Ascending aorta (tissue), 2 donors: ENCODE measurements at regions of chr2 and their contacts with region 1.

Region 1: DNA sequence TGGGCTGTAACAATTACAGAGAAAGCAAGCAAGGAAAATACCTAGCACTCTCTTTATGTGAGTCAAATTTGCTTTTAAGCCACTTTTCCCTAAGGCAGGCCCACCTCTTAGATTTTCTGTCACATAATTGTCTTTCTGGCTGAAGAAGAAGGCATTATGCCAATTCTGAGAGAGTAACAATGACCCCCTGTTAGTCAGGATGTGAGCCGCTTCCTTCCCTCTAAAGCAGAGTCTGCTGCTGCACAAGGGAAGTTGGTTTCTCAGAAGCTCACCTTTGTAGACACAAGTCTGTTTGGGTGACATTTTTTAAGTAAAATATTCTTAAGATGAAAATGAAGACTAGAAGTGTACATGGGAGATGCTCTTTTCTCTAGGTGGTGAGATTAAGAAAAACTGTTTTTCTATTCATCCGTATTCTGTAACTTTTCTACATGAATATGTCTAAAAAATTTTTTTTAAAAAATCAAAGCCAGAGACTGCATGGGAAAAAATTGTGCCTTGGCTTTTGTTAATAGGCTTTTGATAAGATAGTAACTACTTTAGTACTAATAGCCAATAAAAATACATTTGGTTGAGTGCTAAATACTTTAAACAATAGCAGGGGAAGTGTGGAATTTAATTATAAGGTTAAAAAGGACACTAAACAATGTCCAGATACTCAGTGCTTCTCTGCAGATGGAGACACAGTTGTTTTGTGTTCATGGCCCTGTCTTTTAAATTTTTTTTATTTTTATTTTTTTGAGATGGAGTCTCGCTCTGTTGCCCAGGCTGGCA is 33.4 kb upstream of the VPS54 start:
- DNase-seq: no peak
- H3K4me3 ChIP-seq: no peak overlapping the region
- H3K27ac ChIP-seq: no peak overlapping the region
- H3K4me1 ChIP-seq: no peaks in the 10 kb centered on the region
- H3K27me3 ChIP-seq: no peaks in the 10 kb centered on the region
- CTCF ChIP-seq: no peak

Region 2: DNA sequence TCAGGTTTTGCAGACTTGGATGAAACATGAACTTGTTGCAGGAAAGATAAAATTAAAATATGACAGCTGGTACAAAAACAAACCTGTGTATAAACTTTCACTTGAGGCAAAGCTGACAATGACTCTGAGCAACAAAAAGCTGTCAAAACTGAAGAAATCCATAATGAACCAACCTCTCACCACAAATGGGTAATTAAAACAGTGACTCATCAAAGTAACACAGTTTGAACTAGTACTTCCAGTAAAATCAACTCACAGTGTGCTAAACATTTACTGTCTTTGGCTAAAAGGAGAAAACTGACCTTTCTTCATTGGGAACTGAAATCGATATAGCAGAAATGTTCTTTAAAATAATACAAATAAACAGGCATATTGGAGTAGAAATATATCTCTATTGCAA is 674.1 kb before region 1 on chr2:
- intact Hi-C with region 1: no loop called
- DNase-seq: no peak
- H3K4me3 ChIP-seq: no peak overlapping the region
- H3K27ac ChIP-seq: no peak overlapping the region
- H3K4me1 ChIP-seq: no peaks in the 10 kb centered on the region
- H3K27me3 ChIP-seq: no peaks in the 10 kb centered on the region
- CTCF ChIP-seq: no peak

Region 3: GRCh38 chr2:64311948-64312621 is 259.4 kb after region 1 on chr2:
- intact Hi-C with region 1: loop called (anchors 5 kb)
- DNase-seq: peak in 1 of 2 donors; percentile 90
- H3K4me3 ChIP-seq: peak overlapping the region in 1 of 2 donors; percentile 54
- H3K27ac ChIP-seq: peak overlapping the region; percentile 42 to 74
- H3K4me1 ChIP-seq: peaks cover 4 to 7% of the 10 kb centered on the region in 2 donors
- H3K27me3 ChIP-seq: no peaks in the 10 kb centered on the region
- CTCF ChIP-seq: peak; percentile 37 to 61 (median 42)

Region 4: DNA sequence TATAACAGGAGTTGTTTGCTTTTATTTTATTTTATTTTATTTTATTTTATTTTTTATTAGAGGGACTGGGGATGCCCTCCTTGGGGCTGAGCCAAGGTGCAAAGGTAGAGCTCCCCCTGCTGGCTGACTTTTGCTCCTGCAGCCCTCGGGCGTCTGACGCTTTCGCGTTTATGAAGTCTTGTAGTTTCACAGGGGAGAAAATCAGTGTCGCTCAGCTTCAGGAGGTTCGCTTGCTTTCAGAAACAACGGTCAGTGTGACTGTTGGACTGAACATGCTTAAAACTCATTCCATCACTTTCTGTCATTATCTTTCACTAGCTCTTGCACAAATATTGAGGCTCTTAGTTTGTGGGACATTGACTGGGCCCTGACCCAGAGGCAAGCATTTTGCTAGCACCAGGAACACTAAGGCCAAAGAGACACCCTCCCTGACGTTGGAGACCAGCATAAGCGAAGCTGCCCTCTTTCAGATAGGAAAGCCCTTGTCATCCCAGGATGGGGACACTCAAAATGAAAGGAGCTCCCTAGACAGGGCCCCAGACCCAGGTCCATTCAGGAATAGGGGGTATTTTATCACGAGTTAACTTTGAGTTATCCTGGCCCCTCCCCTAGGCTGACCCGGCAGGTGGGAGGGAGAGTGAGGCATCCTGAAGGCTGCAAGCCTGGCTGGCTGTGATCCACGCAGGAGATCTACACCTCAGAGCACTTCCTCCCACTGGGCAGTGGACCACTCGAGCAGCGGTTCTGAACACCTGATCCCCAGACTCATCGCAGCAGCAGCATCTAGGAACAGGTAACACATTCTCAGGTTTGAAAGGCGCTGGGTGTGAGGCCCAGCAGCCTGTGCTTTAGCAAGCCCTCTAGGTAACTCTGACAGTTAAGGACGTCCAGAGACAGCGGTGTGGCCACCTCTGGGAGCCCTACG is 435.7 kb after region 1 on chr2:
- intact Hi-C with region 1: loop called (anchors 10 kb)
- DNase-seq: peak in 1 of 2 donors; percentile 72
- H3K4me3 ChIP-seq: no peak overlapping the region
- H3K27ac ChIP-seq: no peak overlapping the region
- H3K4me1 ChIP-seq: peaks cover 0 to 17% of the 10 kb centered on the region in 2 donors
- H3K27me3 ChIP-seq: no peaks in the 10 kb centered on the region
- CTCF ChIP-seq: peak; percentile 80 to 97 (median 97)

Region 5: DNA sequence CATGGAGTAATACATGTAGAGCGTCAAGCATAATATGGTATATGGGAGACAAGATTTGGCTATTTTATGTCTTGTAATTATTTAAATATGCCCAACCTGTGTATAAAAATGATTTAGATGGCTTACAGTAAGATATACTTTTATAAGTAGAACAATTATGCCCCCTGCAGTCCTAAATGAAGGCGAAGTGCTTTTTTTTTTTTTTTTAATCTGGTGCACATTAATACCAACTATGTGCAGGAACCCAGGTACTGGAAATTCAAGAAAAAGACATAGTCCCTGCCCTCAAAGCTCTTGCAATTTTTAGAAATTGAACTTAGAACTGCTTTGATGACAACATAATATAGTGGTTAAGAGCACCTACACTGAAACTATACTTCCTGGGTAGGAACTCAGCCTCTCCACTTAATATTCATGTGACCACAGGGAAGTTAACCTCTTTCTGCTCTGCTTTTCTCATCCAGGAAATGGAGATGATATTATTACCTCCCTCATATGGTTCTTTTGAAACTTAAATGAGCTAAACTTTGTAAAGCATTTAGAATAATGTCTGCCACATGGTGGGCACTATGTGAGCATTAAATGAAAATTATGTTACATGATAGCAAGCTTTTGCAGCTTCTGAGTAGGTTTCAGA is 509.6 kb after region 1 on chr2:
- intact Hi-C with region 1: loop called (anchors 2 kb)
- DNase-seq: no peak
- H3K4me3 ChIP-seq: no peak overlapping the region
- H3K27ac ChIP-seq: no peak overlapping the region
- H3K4me1 ChIP-seq: no peaks in the 10 kb centered on the region
- H3K27me3 ChIP-seq: no peaks in the 10 kb centered on the region
- CTCF ChIP-seq: peak; percentile 13 to 47 (median 34)